Activated T-helper 1 cell treated with anti-CD3 and anti-CD28 coated beads, Interleukin-12 subunit alpha, Interleukin-12 subunit beta, Interleukin-2, Interleukin-4 antibody, amounts not matched to agents 30 ng/mL and 10 ng/mL and 1 ng/mL, durations not matched to agents 14 hours and 24 hours and 36 hours (primary cell): ENCODE measurements at regions of chr2 and their contacts with region 1.

Region 1: DNA sequence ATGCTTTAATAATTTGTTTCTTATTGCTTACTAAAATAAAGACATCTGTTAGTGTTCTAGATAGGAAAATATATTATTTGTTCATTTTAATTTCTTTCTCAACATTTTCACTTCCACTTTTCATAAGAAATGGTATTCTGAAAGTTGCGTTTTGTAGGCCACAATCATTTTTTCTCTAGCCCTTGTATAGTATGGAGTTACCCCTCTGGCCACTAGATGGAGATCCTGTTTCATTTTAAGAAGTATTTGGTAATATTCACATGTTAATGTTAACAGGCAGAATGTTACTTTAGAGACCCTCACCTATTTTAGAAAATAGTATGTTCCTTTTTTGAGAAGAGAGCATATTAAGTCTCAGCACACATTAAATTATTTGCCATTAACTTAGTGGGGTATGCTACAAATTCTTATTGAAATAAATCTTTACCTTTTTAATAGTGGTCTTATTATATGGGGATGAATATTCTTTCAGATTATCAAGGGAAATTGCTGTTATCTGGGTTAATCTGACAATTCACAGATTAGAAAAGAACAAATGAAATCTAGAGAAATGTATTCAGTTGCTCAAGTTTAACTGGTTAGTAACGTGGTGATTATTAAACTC is 73.9 kb upstream of the TTC27 start:
- DNase-seq: no peak
- H3K4me3 Mint-ChIP-seq: no peak overlapping the region
- H3K27ac Mint-ChIP-seq: no peak overlapping the region
- H3K4me1 Mint-ChIP-seq: no peaks in the 10 kb centered on the region
- H3K27me3 Mint-ChIP-seq: no peaks in the 10 kb centered on the region

Region 2: DNA sequence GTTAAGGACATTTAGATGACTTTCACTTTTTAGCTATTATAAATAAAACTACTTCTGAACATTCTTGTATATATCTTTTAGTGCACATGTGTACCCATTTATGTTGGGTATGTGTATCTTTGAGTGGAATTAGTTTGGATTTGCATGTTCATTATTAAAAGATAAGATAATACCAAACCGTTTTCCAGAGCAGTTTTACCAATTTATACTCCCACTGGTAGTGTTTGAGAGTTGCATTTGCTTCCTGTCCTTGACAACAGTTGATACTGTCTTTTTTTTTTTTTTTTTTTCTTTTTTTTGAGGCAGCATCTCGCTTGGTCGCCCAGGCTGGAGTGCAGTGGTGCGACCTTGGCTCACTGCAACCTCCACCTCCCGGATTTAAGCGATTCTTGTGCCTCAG is 364.9 kb before region 1 on chr2:
- intact Hi-C with region 1: no loop called
- DNase-seq: no peak
- H3K4me3 Mint-ChIP-seq: no peak overlapping the region
- H3K27ac Mint-ChIP-seq: no peak overlapping the region
- H3K4me1 Mint-ChIP-seq: peaks cover 18% of the 10 kb centered on the region
- H3K27me3 Mint-ChIP-seq: no peaks in the 10 kb centered on the region

Region 3: DNA sequence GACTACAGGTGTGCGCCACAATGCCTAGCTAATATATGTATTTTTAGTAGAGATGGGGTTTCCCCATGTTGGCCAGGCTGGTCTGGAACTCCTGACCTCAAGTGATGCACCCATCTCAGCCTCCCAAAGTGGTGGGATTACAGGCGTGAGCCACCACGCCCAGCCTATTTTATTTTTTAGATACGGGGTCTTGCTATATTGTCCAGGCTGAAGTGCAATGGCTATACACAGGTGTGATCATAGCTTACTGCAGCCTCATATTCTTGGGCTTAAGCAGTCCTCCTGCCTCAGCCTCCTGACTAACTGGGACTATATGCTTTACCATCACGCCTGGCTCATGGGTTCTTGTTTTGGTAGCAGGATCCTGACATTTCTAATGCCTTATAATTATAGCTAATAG is 154.7 kb before region 1 on chr2:
- intact Hi-C with region 1: no loop called
- DNase-seq: no peak
- H3K4me3 Mint-ChIP-seq: no peak overlapping the region
- H3K27ac Mint-ChIP-seq: no peak overlapping the region
- H3K4me1 Mint-ChIP-seq: peaks cover 18% of the 10 kb centered on the region
- H3K27me3 Mint-ChIP-seq: no peaks in the 10 kb centered on the region

Region 4: GRCh38 chr2:32425719-32426141 is 128.2 kb before region 1 on chr2:
- intact Hi-C with region 1: no loop called
- DNase-seq: no peak
- H3K4me3 Mint-ChIP-seq: no peak overlapping the region
- H3K27ac Mint-ChIP-seq: no peak overlapping the region
- H3K4me1 Mint-ChIP-seq: peaks cover 35% of the 10 kb centered on the region
- H3K27me3 Mint-ChIP-seq: no peaks in the 10 kb centered on the region

Region 5: GRCh38 chr2:32572737-32573136 is 18.8 kb after region 1 on chr2:
- intact Hi-C with region 1: loop called (anchors 2 kb)
- DNase-seq: no peak
- H3K4me3 Mint-ChIP-seq: peak overlapping the region; percentile 0
- H3K27ac Mint-ChIP-seq: peak overlapping the region; percentile 13
- H3K4me1 Mint-ChIP-seq: peaks cover 37% of the 10 kb centered on the region
- H3K27me3 Mint-ChIP-seq: no peaks in the 10 kb centered on the region

Region 6: DNA sequence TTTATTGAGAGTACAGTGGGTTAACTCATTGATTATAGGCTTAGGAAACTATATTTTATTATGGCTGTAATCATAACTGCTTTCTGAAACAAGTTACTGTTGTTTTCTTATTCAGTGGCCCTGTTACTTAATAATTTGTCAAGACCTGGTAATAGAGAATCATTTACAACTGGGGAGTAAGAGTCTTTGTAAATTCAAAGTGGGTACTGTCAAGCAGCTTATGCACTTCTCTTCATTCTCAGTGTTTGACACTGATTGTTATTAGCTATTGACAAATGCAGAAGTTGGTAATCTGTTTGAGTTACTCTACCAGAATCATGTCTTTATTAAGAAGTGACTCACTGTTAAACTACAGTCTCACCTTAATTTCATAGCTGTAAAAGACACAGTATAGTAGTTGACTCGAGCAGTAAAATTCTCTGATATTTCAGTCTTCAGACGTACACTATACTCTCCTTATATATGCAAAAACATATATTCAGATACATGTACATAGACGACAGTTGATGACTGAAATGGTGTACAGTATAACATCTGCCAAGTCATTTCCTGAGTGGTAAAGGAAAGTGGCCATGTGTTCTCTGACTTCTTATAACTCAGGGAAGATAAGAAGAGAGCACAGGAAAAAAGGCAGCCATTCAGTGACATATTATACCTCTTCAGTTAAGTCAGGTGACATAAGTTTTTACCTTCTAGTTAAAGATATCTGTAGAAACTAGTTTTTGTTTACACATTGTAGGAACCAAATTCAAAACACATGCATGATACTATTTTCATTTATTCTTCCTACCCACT is 37.9 kb after region 1 on chr2:
- intact Hi-C with region 1: loop called (anchors 5 kb)
- DNase-seq: peak; percentile 5
- H3K4me3 Mint-ChIP-seq: peak overlapping the region; percentile 70
- H3K27ac Mint-ChIP-seq: peak overlapping the region; percentile 93
- H3K4me1 Mint-ChIP-seq: peaks cover 37% of the 10 kb centered on the region
- H3K27me3 Mint-ChIP-seq: no peaks in the 10 kb centered on the region

Region 7: GRCh38 chr2:32946314-32947075 is 392.6 kb after region 1 on chr2 and contains the start of gene LTBP1:
- intact Hi-C with region 1: loop called (anchors 1 kb)
- DNase-seq: peak; percentile 68
- H3K4me3 Mint-ChIP-seq: peak within 1 kb of the TSS; percentile 84
- H3K27ac Mint-ChIP-seq: no peak within 1 kb of the TSS
- H3K4me1 Mint-ChIP-seq: peaks cover under 1% of the 10 kb centered on the region
- H3K27me3 Mint-ChIP-seq: peaks cover 30% of the 10 kb centered on the region
- total RNA-seq, gene LTBP1: 0.12 and 0.26 TPM in 2 replicates

Region 8: GRCh38 chr2:33033606-33034081 is 479.7 kb after region 1 on chr2:
- intact Hi-C with region 1: loop called (anchors 5 kb)
- DNase-seq: no peak
- H3K4me3 Mint-ChIP-seq: no peak overlapping the region
- H3K27ac Mint-ChIP-seq: no peak overlapping the region
- H3K4me1 Mint-ChIP-seq: no peaks in the 10 kb centered on the region
- H3K27me3 Mint-ChIP-seq: peaks cover 4% of the 10 kb centered on the region